ENCODE measurements at regions of chr16 and their contacts with region 1.

Region 1: DNA sequence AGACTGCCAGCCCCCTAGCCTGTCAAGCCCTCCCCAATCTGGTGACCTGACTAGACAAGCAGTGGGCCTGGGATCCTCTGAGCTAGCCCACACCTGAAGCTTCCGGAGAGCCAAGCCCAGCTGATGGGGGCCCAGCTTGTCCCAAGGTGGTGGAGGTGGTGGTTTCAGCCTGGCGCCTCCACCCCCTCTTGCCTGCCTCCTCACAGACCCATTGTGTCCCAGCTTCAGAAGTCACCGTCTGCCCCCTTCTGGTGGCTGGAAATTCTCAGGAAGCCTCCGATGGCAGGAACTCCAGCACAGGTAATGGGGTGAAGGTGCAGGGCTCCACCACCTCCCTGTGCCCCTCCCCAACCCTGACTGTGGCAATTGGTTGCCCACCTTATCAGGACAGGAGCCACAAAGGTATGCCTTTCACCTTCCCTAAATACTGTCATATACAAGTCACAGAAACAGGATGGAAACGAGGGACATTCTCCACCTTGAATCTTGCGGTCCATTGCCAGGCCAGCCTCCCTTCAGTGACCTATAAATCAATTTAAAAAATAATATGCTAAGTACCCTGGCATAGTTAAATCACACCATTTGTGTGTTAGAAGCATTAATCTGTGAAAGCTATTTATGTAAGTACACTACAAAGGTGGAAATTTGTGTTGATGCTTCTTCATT is 66.0 kb upstream of the ZNF423 start:
- DNase-seq: peak; percentile 60 to 77 (median 62)
- ATAC-seq: peak; percentile 88 to 91 (median 90)
- H3K4me3 ChIP-seq: no peak overlapping the region
- H3K27ac ChIP-seq: no peak overlapping the region
- H3K4me1 ChIP-seq: no peaks in the 10 kb centered on the region
- H3K27me3 ChIP-seq: no peaks in the 10 kb centered on the region
- CTCF ChIP-seq: peak; percentile 63 to 75 (median 70)
- POLR2A ChIP-seq: no peak

Region 2: GRCh38 chr16:49407873-49408550 is 513.9 kb before region 1 on chr16:
- intact Hi-C with region 1: loop called in 1 of 2 experiments (anchors 10 kb)
- DNase-seq: peak; percentile 89 to 90 (median 89)
- ATAC-seq: peak; percentile 100
- H3K4me3 ChIP-seq: no peak overlapping the region
- H3K27ac ChIP-seq: no peak overlapping the region
- H3K4me1 ChIP-seq: no peaks in the 10 kb centered on the region
- H3K27me3 ChIP-seq: no peaks in the 10 kb centered on the region
- CTCF ChIP-seq: peak; percentile 85 to 94 (median 93)
- POLR2A ChIP-seq: no peak

Region 3: DNA sequence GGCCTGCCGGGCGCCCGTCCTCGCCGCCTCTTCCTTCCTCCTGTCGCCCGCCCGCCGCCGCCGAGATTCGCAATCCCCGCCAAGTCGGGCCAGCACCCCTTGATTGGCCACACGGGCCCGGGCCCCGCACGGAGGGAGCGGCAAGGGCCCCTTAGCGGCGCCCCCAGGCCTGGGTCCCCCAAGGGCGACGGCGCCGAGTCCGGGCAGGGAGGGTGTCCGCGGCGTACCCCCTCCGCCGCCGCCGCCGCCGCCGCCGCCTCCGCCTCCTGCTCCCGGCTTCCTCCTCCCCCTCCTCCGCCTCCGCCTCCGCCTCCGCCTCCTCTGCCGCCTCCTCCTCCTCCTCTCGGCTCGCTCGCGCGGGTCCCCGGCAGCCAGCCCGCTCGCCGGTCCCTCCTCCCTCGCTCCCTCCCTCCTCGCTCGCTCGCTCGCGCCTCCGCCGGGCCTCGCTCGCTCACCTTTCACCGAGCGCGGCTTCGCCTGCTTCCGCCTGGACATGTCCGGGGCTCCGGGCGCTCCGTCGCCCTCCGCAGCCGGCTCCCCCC is 66.6 kb before region 1 on chr16:
- intact Hi-C with region 1: loop called in 1 of 2 experiments (anchors 5 kb)
- DNase-seq: peak; percentile 91 to 93 (median 92)
- ATAC-seq: peak; percentile 73 to 87 (median 84)
- H3K4me3 ChIP-seq: peak overlapping the region; percentile 57 to 63 (median 61)
- H3K27ac ChIP-seq: peak overlapping the region; percentile 31 to 73 (median 69)
- H3K4me1 ChIP-seq: peaks cover 0 to 8% (median 0%) of the 10 kb centered on the region in 4 donors
- H3K27me3 ChIP-seq: no peaks in the 10 kb centered on the region
- CTCF ChIP-seq: no peak
- POLR2A ChIP-seq: peak; percentile 48